ENCODE measurements at regions of chr2 and their contacts with region 1.

Region 1: DNA sequence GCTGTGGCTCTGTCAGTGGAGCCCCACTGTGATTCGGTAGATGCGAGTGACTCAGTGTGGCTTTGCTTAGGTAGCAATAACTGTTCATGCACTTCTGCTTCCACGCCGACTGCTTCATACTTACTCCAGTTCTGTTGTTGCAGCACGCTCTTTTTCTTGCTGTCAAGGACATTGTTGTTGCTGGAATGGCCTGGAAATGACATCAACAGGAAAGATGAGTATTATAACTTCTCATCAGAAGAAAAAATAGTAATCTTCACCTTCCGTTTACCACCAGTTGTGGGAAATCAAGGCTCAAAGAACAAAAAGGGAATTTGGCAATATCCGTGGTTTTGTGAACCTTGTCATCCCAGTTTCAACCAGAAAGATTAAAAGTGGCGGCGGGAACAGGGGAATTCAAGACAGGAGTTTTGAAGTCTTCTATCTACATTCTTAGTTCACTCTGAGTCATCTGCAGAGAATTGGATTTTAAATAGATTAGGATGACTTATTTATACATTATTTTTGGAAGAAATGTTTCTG is 8.3 kb downstream of the TM4SF20 start:
- H3K4me3 Mint-ChIP-seq: peak overlapping the region; percentile 23
- H3K27ac Mint-ChIP-seq: peak overlapping the region; percentile 89
- H3K4me1 Mint-ChIP-seq: peaks cover 55% of the 10 kb centered on the region
- H3K27me3 Mint-ChIP-seq: no peaks in the 10 kb centered on the region

Region 2: GRCh38 chr2:227388537-227389011 is 17.7 kb after region 1 on chr2:
- intact Hi-C with region 1: loop called (anchors 1 kb)
- H3K4me3 Mint-ChIP-seq: no peak overlapping the region
- H3K27ac Mint-ChIP-seq: peak overlapping the region; percentile 93
- H3K4me1 Mint-ChIP-seq: peaks cover 17% of the 10 kb centered on the region
- H3K27me3 Mint-ChIP-seq: no peaks in the 10 kb centered on the region

Region 3: GRCh38 chr2:227450926-227451654 is 80.2 kb after region 1 on chr2:
- intact Hi-C with region 1: no loop called
- H3K4me3 Mint-ChIP-seq: no peak overlapping the region
- H3K27ac Mint-ChIP-seq: peak overlapping the region; percentile 65
- H3K4me1 Mint-ChIP-seq: peaks cover 34% of the 10 kb centered on the region
- H3K27me3 Mint-ChIP-seq: no peaks in the 10 kb centered on the region

Region 4: DNA sequence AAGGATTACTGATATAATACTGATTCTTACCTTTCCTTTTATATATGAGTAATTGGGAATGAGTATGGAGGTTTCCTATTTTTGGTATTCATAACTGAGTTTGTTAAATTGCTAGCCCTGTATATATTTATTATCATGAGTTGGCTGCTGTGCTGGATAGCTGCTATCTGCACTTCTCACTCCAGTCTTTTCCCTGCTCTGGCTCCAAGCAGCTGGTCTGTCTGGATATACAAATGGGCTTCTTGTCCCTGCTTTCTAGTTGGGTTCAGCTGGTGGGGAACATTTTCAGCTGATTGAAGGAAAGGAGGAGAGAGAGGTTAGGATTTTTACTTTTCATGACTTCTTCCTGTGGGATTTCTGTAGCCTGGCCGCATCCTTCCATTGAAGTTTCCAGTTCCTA is 142.3 kb after region 1 on chr2:
- intact Hi-C with region 1: no loop called
- H3K4me3 Mint-ChIP-seq: no peak overlapping the region
- H3K27ac Mint-ChIP-seq: no peak overlapping the region
- H3K4me1 Mint-ChIP-seq: peaks cover 74% of the 10 kb centered on the region
- H3K27me3 Mint-ChIP-seq: no peaks in the 10 kb centered on the region

Region 5: DNA sequence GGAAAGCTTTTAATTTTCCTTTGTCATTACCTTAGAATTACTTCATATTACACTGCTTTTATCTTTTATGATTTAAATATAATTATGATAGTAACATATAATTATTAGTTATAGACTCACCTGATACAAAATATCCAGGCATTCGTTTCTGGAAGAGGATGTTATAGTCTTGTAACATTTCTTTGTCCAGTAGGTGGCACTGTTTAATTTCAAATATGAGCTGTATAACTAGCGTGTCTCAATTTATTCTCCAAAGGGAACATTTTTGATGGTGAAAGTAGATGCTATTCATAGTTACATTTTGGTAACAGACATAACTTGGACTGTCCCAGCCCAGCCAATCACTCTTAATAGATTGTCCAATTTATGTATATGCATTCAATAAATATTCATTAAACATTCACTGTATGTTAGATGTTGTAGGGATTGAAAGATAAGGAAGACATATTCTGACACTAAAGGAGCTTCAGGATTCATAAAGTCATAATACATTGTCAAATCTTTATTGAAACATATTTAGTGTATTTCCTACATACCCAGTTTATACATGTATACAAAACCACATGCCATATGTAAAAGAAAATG is 519.7 kb after region 1 on chr2:
- intact Hi-C with region 1: no loop called
- H3K4me3 Mint-ChIP-seq: no peak overlapping the region
- H3K27ac Mint-ChIP-seq: no peak overlapping the region
- H3K4me1 Mint-ChIP-seq: peaks cover 5% of the 10 kb centered on the region
- H3K27me3 Mint-ChIP-seq: peaks cover 5% of the 10 kb centered on the region